Activated T-helper 2 cell treated with anti-CD3 and anti-CD28 coated beads, Interferon-gamma antibody, Interleukin-2, Interleukin-4, amounts not matched to agents 10 μg/mL and 5 μg/mL and 100 μg/mL, durations not matched to agents 14 hours and 24 hours and 36 hours (primary cell): ENCODE measurements at regions of chr4 and their contacts with region 1.

Region 1: DNA sequence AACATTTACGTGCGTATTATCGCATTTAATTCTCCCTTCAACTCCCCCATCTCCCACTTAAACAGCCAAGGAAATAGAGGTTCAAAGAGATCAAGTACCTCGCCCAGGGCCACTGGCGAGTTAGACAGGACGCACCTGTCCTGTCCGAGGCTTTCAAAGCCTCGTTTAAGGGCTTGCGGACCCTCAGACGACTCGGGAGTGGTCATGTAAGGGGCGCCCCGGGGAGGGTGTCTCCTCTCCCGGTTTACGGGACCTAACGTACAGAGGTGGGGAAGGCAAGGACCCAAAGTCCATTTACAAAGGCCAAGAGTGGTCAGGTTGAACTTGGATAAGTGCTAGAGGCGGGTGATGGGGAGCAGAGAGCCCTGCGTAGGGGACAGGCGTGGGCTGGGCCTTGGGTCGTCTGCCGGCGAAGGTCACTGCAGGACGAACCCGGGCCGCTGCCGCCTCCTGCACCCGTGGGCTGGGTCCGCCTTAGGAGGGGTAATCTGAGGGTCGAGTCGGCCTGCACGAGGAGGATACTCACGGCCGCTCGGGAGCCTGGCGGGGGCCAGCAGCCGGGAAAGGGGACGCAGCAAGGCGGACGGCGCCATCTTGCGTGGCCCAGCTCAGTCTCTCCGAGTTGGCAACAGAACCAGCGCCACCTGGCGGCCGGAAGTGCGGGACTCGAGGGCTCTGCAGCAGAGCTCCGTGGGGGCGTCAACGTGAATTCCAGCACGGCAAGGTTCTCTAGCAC is 5.9 kb upstream of the NAA15 start:
- DNase-seq: peak; percentile 91
- H3K4me3 Mint-ChIP-seq: peak overlapping the region; percentile 96
- H3K27ac Mint-ChIP-seq: peak overlapping the region; percentile 96
- H3K4me1 Mint-ChIP-seq: peaks cover 28% of the 10 kb centered on the region
- H3K27me3 Mint-ChIP-seq: no peaks in the 10 kb centered on the region

Region 2: DNA sequence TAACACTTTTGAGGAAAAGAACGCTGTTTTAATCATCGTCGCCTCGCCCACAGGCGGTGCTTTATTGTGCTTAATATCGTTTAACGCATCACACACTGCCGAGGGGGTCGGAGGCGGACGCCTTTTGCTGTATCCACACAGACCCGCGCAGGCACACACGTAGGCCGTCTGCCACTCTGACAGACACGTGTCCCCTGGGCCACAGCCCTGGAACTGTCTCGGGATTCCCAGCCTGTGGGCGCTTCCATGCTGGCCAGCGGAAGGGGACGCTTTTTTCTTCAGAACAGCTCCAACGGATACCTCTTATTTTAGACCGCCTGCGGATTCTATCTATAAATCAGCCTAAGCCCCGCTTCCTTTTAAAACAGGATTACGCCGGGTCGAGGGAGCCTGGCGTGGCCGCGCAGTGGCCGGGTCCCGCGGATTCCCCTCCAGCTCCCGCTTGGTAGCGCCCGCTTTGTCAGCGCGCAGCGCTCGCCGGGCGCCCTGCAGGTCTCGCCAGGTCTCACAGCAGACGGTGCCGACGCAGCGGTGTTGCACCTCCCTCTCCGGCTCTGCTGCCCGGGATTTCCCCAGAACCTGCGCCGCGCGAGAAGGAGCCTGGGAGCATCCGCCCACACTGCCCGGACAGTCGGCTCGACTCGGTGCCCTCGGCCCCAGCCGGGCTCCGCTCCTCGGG is 280.0 kb before region 1 on chr4 and contains the start of gene NOCT:
- intact Hi-C with region 1: loop called (anchors 1 kb)
- DNase-seq: peak; percentile 89
- H3K4me3 Mint-ChIP-seq: peak within 1 kb of the TSS; percentile 89
- H3K27ac Mint-ChIP-seq: peak within 1 kb of the TSS; percentile 93
- H3K4me1 Mint-ChIP-seq: peaks cover 41% of the 10 kb centered on the region
- H3K27me3 Mint-ChIP-seq: no peaks in the 10 kb centered on the region
- total RNA-seq, gene NOCT: 20.3 and 22.1 TPM in 2 replicates

Region 3: GRCh38 chr4:139083956-139084803 is 211.2 kb before region 1 on chr4:
- intact Hi-C with region 1: loop called (anchors 1 kb)
- DNase-seq: peak; percentile 81
- H3K4me3 Mint-ChIP-seq: peak overlapping the region; percentile 99
- H3K27ac Mint-ChIP-seq: peak overlapping the region; percentile 99
- H3K4me1 Mint-ChIP-seq: peaks cover 30% of the 10 kb centered on the region
- H3K27me3 Mint-ChIP-seq: no peaks in the 10 kb centered on the region

Region 4: DNA sequence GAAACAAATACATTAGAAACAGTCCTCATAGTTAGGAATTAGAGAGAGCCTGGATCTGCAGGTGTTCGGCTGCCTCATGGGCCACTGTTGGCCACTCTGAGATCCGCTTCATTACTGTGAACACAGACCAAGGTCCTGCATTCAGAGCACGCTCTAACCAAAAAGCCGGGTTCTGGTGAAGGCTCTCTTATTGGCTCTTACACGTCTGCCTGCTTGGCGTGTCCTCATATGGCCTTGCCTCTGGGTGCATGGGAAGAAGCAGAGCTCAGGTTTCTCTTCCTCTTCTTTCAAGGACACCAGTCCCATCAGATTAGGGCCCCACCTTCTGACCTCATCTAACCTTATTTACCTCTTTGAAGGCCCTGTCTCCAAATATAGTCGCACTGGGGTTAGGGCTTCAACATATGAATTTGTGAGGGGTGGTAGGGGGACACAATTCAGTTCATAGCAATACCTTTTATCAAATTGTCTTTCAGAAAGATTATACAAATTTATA is 81.3 kb before region 1 on chr4:
- intact Hi-C with region 1: no loop called
- DNase-seq: no peak
- H3K4me3 Mint-ChIP-seq: no peak overlapping the region
- H3K27ac Mint-ChIP-seq: no peak overlapping the region
- H3K4me1 Mint-ChIP-seq: no peaks in the 10 kb centered on the region
- H3K27me3 Mint-ChIP-seq: peaks cover 7% of the 10 kb centered on the region

Region 5: DNA sequence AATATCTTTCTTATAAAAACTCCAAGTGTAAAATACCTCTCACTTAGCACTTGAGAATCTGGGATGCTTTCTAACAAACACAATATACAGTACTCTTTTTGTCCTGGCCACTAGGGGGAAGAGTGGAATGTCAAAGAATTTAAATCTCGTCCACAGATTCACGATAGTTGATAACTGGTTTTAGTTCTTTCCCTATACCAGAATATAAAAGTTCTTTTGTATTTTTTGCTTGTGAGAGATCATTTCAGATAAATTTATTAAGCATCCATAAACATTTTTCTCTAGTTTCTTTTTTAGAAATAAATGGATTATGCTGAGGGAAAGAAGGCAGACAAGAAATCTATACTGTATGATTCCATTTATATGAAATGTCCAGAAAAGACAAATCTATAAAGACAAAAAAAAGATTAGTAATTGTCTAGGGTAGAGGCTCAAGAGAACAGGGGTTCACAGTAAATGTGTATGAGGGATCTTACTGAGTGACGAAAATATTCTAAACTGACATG is 65.8 kb before region 1 on chr4:
- intact Hi-C with region 1: loop called (anchors 1 kb)
- DNase-seq: no peak
- H3K4me3 Mint-ChIP-seq: no peak overlapping the region
- H3K27ac Mint-ChIP-seq: no peak overlapping the region
- H3K4me1 Mint-ChIP-seq: peaks cover 3% of the 10 kb centered on the region
- H3K27me3 Mint-ChIP-seq: no peaks in the 10 kb centered on the region

Region 6: GRCh38 chr4:139266583-139267257 is 28.7 kb before region 1 on chr4:
- intact Hi-C with region 1: loop called (anchors 1 kb)
- DNase-seq: peak; percentile 77
- H3K4me3 Mint-ChIP-seq: peak overlapping the region; percentile 37
- H3K27ac Mint-ChIP-seq: peak overlapping the region; percentile 73
- H3K4me1 Mint-ChIP-seq: peaks cover 27% of the 10 kb centered on the region
- H3K27me3 Mint-ChIP-seq: peaks cover 18% of the 10 kb centered on the region

Region 7: DNA sequence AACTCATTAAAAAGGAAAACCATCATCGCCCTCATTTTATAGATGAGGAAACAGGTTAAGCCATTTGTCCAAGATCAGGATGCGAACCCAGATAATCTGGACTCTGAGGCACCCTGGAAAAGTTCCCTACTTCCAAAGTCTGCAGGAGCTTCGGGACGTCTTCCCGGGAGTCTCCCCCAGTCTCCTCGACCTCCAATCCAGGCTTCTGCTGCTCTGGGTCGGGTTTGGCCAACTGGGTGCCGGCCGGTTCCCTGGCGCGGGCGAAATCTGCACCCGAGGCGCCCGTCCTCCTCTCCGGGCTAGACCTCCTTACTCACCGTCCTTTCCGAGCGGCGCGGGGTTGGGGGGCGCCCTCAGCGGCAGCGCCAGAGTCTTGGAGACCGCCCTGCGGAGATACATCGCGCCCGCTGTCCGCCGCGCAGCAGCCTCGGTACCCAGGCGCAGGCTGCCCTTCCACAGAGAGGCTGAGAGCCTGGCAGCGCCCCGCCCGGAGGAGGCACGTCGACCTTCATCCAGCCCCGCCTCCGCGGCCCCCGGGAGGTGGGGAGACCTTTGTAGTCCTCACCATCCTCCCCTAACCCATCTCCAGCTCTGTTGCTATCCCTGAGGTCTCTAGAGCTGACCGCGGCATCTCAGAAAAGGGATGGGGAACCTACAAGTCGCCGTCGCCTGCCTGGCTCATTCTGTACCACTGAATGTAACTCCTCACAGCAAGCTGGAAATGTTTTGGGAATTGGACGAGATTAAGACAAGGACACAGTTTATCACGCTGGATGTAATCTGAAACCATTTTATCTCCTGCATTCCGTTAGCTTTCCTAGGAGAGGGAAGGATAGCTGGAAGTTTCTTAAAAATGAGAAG is 15.4 kb before region 1 on chr4 and contains the start of gene MGARP:
- intact Hi-C with region 1: loop called (anchors 2 kb)
- DNase-seq: no peak
- H3K4me3 Mint-ChIP-seq: peak within 1 kb of the TSS; percentile 72
- H3K27ac Mint-ChIP-seq: no peak within 1 kb of the TSS
- H3K4me1 Mint-ChIP-seq: peaks cover 14% of the 10 kb centered on the region
- H3K27me3 Mint-ChIP-seq: peaks cover 67% of the 10 kb centered on the region
- total RNA-seq, gene MGARP: not detected in 2 replicates

Region 8: GRCh38 chr4:139315221-139315675 is 19.9 kb after region 1 on chr4:
- intact Hi-C with region 1: no loop called
- DNase-seq: no peak
- H3K4me3 Mint-ChIP-seq: no peak overlapping the region
- H3K27ac Mint-ChIP-seq: no peak overlapping the region
- H3K4me1 Mint-ChIP-seq: peaks cover 50% of the 10 kb centered on the region
- H3K27me3 Mint-ChIP-seq: no peaks in the 10 kb centered on the region

Region 9: GRCh38 chr4:139331185-139331584 is 35.8 kb after region 1 on chr4:
- intact Hi-C with region 1: loop called (anchors 5 kb)
- DNase-seq: no peak
- H3K4me3 Mint-ChIP-seq: no peak overlapping the region
- H3K27ac Mint-ChIP-seq: peak overlapping the region; percentile 64
- H3K4me1 Mint-ChIP-seq: peaks cover 31% of the 10 kb centered on the region
- H3K27me3 Mint-ChIP-seq: no peaks in the 10 kb centered on the region

Region 10: GRCh38 chr4:139866276-139866962 is 571.0 kb after region 1 on chr4:
- intact Hi-C with region 1: no loop called
- DNase-seq: no peak
- H3K4me3 Mint-ChIP-seq: no peak overlapping the region
- H3K27ac Mint-ChIP-seq: no peak overlapping the region
- H3K4me1 Mint-ChIP-seq: peaks cover 1% of the 10 kb centered on the region
- H3K27me3 Mint-ChIP-seq: peaks cover 25% of the 10 kb centered on the region